ENCODE measurements at regions of chr17 and their contacts with region 1.

Region 1: GRCh38 chr17:29148790-29149430 is 31.3 kb downstream of the MYO18A start:
- DNase-seq: peak; percentile 96 to 99
- H3K4me3 ChIP-seq: peak overlapping the region; percentile 47
- H3K4me3 Mint-ChIP-seq: peak overlapping the region; percentile 69
- H3K27ac Mint-ChIP-seq: peak overlapping the region; percentile 66
- H3K4me1 ChIP-seq: peaks cover 43% of the 10 kb centered on the region
- H3K4me1 Mint-ChIP-seq: peaks cover 37% of the 10 kb centered on the region
- H3K27me3 ChIP-seq: no peaks in the 10 kb centered on the region
- H3K27me3 Mint-ChIP-seq: no peaks in the 10 kb centered on the region
- CTCF ChIP-seq: peak; percentile 97

Region 2: DNA sequence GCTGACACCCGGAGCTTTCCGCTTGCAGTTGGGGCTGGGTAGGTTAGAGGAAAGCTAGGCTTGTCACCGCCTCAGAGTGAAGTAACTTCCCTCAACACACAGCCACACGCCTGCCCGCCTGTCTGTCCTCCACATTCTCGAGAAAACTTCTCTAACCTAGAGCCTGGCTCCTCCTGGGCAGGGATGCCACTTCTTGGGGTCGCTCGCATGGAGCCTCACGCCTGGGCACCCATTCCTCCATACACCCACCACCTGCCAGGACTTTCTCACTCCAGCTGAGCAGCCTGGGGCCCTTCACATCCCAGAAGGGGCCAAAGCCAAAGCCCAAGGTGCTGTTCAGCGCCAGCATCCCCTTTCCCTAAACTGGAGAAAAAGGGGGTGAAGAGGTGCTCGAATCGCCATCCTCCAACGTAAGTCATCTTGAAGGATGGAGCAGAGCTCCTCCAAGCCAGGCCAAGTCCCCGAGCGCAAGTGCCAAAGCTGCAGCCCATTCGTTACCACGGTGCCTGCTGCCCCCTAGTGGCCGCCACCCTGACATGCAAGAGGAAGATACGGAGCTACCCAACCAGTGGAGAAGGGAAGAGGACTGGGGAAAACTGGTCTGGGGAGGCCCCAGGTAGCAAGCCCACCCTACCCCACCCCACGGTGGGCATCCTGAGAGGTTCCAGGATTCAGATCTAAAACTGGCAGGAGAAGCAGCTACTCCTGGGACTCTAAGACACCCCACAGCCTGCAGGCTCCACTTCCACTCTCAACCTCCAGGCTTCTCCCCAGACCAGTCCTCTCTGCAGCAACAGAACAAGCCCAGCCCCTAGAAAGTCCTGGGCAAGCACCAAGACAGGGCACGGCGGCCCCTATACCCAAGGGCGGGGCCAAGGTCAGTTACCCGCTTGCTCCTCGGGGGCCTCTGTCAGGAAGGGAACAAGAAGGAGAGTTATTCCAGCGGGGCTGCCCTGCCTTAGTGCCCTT is 31.8 kb before region 1 on chr17:
- CTCF ChIA-PET with region 1: interaction called, 18 read pairs
- POLR2A ChIA-PET with region 1: no interaction called
- intact Hi-C with region 1: no loop called
- DNase-seq: peak; percentile 71 to 79
- H3K4me3 ChIP-seq: no peak overlapping the region
- H3K4me3 Mint-ChIP-seq: no peak overlapping the region
- H3K27ac Mint-ChIP-seq: peak overlapping the region; percentile 33
- H3K4me1 ChIP-seq: no peaks in the 10 kb centered on the region
- H3K4me1 Mint-ChIP-seq: no peaks in the 10 kb centered on the region
- H3K27me3 ChIP-seq: no peaks in the 10 kb centered on the region
- H3K27me3 Mint-ChIP-seq: no peaks in the 10 kb centered on the region
- CTCF ChIP-seq: peak; percentile 85 to 92

Region 3: DNA sequence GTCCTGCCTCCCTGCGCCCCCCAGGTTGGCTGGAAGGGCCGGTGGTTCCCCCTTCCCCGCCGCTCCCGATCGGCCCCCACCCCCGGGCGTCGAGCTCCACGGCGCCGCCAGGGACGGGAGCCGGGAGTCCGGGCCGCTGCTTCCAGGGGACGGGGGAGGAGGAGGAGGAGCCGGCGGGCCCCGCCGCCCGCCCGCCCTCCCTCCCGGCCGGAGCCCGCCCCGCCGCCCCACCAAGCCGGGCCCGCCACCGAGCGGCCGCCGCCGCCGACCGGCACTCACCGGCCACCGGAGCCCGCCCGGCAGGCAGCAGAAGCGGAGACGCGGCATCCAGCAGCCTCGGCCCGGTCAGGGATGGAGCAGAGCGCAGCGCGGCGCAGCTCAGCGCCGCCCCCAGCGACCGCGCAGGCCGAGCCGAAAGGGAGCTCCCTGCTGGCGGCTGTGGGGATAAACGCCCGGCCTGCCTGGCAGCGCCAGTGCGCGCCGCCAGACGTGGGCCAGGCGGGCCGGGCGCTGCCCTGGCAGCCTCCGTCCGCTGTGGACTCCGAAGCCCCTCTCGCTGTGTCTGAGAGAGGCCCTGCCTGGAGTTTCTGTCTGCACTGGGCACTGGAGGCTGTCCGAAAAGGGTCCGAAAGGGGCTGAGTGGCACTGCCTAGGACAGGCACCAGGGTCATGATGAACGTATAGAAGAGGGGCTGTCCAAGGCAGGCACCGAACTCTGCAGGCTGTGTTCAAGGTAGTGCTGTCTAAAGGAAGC is 31.3 kb after region 1 on chr17 and contains the start of gene MYO18A:
- CTCF ChIA-PET with region 1: interaction called, 449 read pairs
- POLR2A ChIA-PET with region 1: interaction called, 34 read pairs
- intact Hi-C with region 1: loop called (anchors 1 kb)
- DNase-seq: peak; percentile 74 to 90
- H3K4me3 ChIP-seq: peak within 1 kb of the TSS; percentile 71
- H3K4me3 Mint-ChIP-seq: peak within 1 kb of the TSS; percentile 93
- H3K27ac Mint-ChIP-seq: peak within 1 kb of the TSS; percentile 93
- H3K4me1 ChIP-seq: peaks cover 31% of the 10 kb centered on the region
- H3K4me1 Mint-ChIP-seq: peaks cover 21% of the 10 kb centered on the region
- H3K27me3 ChIP-seq: no peaks in the 10 kb centered on the region
- H3K27me3 Mint-ChIP-seq: peaks cover 3% of the 10 kb centered on the region
- CTCF ChIP-seq: peak; percentile 94 to 95
- total RNA-seq, gene MYO18A: 47.1 and 55.5 TPM in 2 replicates

Region 4: DNA sequence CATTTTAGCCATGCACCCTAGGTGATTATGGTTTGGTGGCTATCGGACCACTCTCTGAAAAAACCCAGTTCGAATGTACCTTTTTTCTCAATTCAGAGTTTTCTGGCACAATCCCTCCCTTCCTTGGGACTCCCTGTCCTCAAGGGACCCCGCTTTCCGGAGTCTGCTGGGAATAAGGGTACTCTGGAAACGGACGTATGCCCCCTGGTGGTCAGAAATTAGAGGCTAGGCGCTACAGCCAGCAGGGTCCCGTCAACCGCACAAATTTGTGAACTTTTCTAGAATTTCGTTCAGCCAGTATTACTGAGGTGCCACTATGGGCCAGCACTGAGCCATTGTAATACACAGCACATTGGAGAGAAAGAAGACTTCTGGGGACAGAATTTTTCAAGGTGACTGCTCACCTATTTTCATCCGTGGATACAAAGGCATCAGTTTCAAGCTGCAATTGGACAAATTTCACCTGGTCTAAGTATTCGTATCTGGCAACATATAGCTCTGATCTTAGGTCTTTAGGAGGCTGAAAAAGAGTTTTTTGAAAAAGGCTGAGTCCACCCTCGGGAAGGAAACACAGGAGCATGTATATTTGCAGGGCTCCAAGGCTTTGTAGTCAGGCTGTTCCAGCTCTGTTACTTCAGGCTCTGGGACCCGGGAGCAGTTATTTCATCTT is 70.6 kb after region 1 on chr17:
- CTCF ChIA-PET with region 1: interaction called, 49 read pairs
- POLR2A ChIA-PET with region 1: no interaction called
- intact Hi-C with region 1: loop called (anchors 1 kb)
- DNase-seq: peak; percentile 86 to 92
- H3K4me3 ChIP-seq: no peak overlapping the region
- H3K4me3 Mint-ChIP-seq: no peak overlapping the region
- H3K27ac Mint-ChIP-seq: no peak overlapping the region
- H3K4me1 ChIP-seq: peaks cover 10% of the 10 kb centered on the region; the same call in 1 of the 2 replicates
- H3K4me1 Mint-ChIP-seq: peaks cover 7% of the 10 kb centered on the region
- H3K27me3 ChIP-seq: no peaks in the 10 kb centered on the region
- H3K27me3 Mint-ChIP-seq: no peaks in the 10 kb centered on the region
- CTCF ChIP-seq: peak; percentile 91 to 97

Region 5: GRCh38 chr17:29293890-29294579 is 145.1 kb after region 1 on chr17 and contains the start of gene NUFIP2:
- CTCF ChIA-PET with region 1: interaction called, 12 read pairs
- POLR2A ChIA-PET with region 1: interaction called, 5 read pairs
- intact Hi-C with region 1: no loop called
- DNase-seq: peak; percentile 99
- H3K4me3 ChIP-seq: peak within 1 kb of the TSS; percentile 100
- H3K4me3 Mint-ChIP-seq: peak within 1 kb of the TSS; percentile 94
- H3K27ac Mint-ChIP-seq: peak within 1 kb of the TSS; percentile 96
- H3K4me1 ChIP-seq: peaks cover 11% of the 10 kb centered on the region
- H3K4me1 Mint-ChIP-seq: peaks cover 13% of the 10 kb centered on the region
- H3K27me3 ChIP-seq: no peaks in the 10 kb centered on the region
- H3K27me3 Mint-ChIP-seq: no peaks in the 10 kb centered on the region
- CTCF ChIP-seq: no peak
- total RNA-seq, gene NUFIP2: 105 and 114 TPM in 2 replicates